Posterior vena cava (tissue), 2 donors: ENCODE measurements at regions of chr7 and their contacts with region 1.

Region 1: GRCh38 chr7:46352004-46352954 is 431.2 kb upstream of the IGFBP3 start:
- DNase-seq: no peak

Region 2: GRCh38 chr7:45923290-45923689 is 429.0 kb before region 1 on chr7:
- intact Hi-C with region 1: loop called (anchors 5 kb)
- DNase-seq: peak; percentile 94

Region 3: GRCh38 chr7:46414946-46415345 is 62.7 kb after region 1 on chr7:
- intact Hi-C with region 1: loop called in 1 of 2 experiments (anchors 10 kb)
- DNase-seq: no peak

Region 4: DNA sequence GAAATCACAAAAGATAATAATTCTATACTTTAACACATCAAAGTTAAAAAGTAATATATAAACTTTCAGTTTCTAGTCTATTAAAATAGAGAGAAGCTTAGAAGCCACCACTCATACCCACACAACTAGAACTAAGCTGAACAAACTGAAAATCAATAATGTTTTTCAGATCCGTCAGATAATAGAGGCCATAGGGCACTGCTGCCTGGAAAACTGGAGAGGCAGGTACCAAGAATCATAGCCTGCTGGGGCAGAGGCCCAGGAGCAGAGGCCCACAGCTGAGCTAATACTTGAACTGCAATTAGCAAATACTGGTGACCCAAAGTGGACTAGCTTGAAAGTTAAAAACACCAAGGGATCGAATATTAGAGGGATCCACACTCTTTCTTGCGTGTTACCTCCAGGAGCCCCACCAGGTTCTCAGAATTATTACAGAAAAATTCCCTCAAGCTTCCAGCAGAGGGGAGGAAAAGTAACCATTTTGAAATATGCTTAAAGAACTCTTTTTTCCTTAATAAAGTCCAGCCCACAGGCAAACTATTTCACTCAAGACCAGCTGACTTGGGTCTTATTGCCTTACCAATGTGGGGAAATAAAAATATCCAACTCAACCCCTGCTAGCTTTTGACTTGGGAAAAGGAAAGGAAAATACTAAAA is 342.9 kb after region 1 on chr7:
- intact Hi-C with region 1: no loop called
- DNase-seq: no peak